IMR-90 (cell line): ENCODE measurements at regions of chr1 and their contacts with region 1.

Region 1: GRCh38 chr1:223700942-223701637 is 11.2 kb upstream of the CAPN2 start:
- DNase-seq: peak; percentile 98
- ATAC-seq: peak; percentile 81
- H3K4me3 ChIP-seq: peak overlapping the region; percentile 9; the same call in 1 of the 2 replicates
- H3K27ac ChIP-seq: peak overlapping the region; percentile 95
- H3K4me1 ChIP-seq: peaks cover 34% of the 10 kb centered on the region
- H3K27me3 ChIP-seq: no peaks in the 10 kb centered on the region
- CTCF ChIP-seq: no peak
- POLR2A ChIP-seq: peak; percentile 86; the same call in 1 of the 2 replicates
- RAD21 ChIP-seq: no peak

Region 2: DNA sequence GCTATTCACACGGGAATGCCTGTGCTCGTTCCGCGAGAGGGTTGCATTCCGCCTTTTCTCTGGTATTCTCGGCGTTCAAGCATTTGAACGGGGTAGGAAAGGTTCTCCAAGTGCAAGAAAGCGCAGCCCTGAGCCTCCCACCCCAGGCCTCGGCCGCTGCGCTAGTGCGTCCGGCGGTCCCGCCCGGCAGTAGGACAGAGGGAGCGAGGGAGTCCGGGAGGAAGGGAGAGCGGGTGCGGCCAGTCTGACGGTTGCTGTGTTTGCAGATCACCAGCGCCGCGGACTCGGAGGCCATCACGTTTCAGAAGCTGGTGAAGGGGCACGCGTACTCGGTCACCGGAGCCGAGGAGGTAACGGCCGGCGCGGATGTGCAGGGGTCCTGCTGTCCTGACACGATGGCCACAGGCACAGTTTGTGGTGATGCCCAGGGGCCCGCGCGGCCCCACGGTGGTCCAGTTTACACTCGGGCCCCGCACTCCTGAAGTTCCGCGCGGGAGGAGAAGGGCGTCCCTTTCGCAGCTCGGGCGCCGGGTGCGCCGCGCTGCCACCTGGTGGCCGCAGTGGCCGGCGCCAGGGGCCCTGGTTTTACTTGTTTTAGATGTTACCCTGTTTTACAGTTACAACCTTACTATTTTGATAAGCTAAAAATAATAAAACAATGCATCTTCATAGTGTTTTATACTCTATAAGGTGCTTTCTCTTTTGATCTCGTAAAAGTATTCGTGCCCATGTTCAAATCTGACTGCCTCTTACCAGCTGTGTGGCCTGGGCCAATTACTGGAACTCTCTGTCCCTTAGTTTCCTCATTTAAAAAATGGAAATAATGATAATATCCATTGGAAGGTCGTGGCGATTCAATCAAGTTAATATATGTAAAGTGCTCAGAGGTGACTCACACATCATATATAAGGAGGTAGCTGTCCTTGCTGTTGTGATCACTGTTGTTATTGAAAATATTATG is 48.0 kb after region 1 on chr1:
- CTCF ChIA-PET with region 1: interaction called, 8 read pairs
- POLR2A ChIA-PET with region 1: interaction called, 3 read pairs
- dilution Hi-C with region 1: no loop called
- in situ Hi-C with region 1: loop called (anchors 5 kb)
- intact Hi-C with region 1: loop called (anchors 1 kb)
- DNase-seq: peak; percentile 45
- ATAC-seq: peak; percentile 60
- H3K4me3 ChIP-seq: 0 out of 2 replicates have a peak overlapping the region, but pooled peaks have one; percentile 18
- H3K27ac ChIP-seq: peak overlapping the region; percentile 77
- H3K4me1 ChIP-seq: peaks cover 23% of the 10 kb centered on the region
- H3K27me3 ChIP-seq: no peaks in the 10 kb centered on the region
- CTCF ChIP-seq: peak; percentile 84
- POLR2A ChIP-seq: no peak
- RAD21 ChIP-seq: peak; percentile 81

Region 3: DNA sequence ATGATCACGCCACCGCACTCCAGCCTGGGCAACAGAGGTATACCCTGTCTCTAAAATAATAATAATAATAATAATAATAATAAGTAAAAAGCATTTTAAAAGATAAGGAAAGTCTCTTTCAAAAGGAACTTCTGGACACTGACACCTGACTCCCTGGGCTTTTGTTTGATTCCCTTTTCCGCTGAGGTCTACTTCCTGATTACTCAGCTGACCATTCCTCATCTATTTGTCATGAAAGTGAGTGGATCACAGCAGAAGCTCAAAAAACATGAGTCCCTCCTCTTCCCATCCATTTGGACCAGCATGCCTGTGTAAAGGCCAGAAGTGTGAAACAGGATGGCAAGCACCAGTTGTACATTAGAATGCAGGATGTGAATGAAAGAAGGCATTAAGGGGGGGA is 351.7 kb after region 1 on chr1:
- CTCF ChIA-PET with region 1: no interaction called
- POLR2A ChIA-PET with region 1: no interaction called
- dilution Hi-C with region 1: no loop called
- in situ Hi-C with region 1: no loop called
- intact Hi-C with region 1: loop called (anchors 1 kb)
- DNase-seq: peak; percentile 89
- ATAC-seq: peak; percentile 74
- H3K4me3 ChIP-seq: no peak overlapping the region
- H3K27ac ChIP-seq: peak overlapping the region; percentile 37; the same call in 1 of the 2 replicates
- H3K4me1 ChIP-seq: peaks cover 5% of the 10 kb centered on the region; the same call in 1 of the 2 replicates
- H3K27me3 ChIP-seq: no peaks in the 10 kb centered on the region
- CTCF ChIP-seq: no peak
- POLR2A ChIP-seq: no peak
- RAD21 ChIP-seq: no peak

Region 4: DNA sequence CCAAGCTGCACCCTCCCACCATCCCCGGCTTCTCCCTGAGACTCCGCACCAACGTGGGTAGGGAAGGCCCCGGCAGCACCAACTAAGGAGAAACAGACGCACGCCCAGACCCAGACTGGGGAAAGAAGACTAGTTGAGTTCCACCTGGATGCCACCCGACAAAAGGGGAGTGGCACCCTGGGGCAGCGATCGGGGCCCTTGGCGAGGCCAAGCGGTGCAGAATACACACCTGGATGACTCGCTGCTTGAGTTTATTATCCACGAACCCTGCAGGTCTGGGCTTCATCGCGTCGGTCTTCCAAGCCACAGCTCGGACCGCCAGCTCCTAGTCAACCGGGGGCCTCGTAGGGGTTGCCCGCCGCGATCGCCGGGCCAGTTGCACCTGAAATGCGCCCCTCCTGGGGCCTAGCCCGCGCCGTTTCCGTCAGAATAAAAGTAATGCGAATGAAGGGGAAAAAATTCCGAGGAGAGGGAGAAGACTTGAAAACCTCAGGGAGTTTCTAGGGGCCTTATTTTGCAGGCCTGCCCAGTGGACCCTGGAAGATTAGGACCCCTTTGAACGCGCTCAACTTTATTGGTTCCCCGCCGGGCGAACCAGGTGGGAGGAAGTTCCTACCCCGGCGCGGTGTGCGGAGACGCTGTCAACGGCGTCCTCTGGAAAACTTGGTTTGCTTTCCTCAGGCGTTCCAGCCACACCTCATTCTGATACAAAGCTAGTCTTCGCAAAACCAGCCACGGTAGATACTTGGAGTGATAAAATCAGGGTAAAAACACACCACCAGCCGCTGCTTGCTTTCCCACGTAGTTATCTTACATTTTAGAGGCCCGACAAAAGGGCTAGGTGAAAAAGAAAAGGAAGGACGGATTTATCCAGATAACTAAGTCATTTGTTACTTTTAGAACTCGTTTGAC is 629.0 kb after region 1 on chr1 and contains the start of gene NVL:
- CTCF ChIA-PET with region 1: no interaction called
- POLR2A ChIA-PET with region 1: no interaction called
- dilution Hi-C with region 1: no loop called
- in situ Hi-C with region 1: no loop called
- intact Hi-C with region 1: loop called (anchors 2 kb)
- DNase-seq: peak; percentile 86
- ATAC-seq: peak; percentile 96
- H3K4me3 ChIP-seq: peak within 1 kb of the TSS; percentile 70
- H3K27ac ChIP-seq: peak within 1 kb of the TSS; percentile 95
- H3K4me1 ChIP-seq: no peaks in the 10 kb centered on the region; the same call in 1 of the 2 replicates
- H3K27me3 ChIP-seq: no peaks in the 10 kb centered on the region
- CTCF ChIP-seq: no peak
- POLR2A ChIP-seq: peak; percentile 58
- RAD21 ChIP-seq: no peak
- total RNA-seq, gene NVL: 16.5 and 18.9 TPM in 2 replicates